ENCODE measurements at regions of chr3 and their contacts with region 1.

Region 1: GRCh38 chr3:72821161-72821781 is 27.0 kb downstream of the SHQ1 start:
- DNase-seq: peak in 1 of 2 donors; percentile 9
- H3K4me3 ChIP-seq: no peak overlapping the region
- H3K27ac ChIP-seq: no peak overlapping the region
- H3K4me1 ChIP-seq: peaks cover 3 to 9% of the 10 kb centered on the region in 2 donors
- H3K27me3 ChIP-seq: no peaks in the 10 kb centered on the region
- CTCF ChIP-seq: no peak
- POLR2A ChIP-seq: no peak

Region 2: DNA sequence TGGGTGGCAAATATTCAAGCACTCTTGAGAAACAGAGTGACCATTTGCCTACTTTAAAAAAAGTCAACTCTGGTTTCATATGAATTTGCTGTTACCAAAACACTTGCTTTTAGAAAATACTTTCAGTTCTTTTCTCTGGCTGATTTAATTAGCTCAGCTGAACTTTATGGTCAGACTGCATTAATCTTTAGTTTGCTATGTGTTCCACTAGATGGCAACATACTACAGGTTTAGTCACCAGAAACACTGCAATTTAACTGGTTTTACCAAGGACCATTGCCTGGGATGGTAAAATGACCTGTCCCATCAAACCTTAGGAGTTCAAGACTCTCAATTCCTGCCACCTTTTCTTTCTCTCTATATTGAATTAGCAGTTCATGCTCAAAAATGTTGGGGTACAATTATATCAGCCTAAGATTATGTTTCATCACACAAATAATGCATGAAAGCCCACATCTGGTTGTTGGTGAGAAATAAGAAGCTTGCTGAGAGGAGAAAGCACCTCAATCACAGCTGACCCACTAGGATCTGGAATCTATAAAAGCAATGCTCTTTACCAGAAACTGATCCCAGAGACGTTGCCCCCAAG is 1110.3 kb before region 1 on chr3:
- intact Hi-C with region 1: loop called (anchors 10 kb)
- DNase-seq: no peak
- H3K4me3 ChIP-seq: no peak overlapping the region
- H3K27ac ChIP-seq: peak overlapping the region; percentile 28 to 60 (median 46)
- H3K4me1 ChIP-seq: peaks cover 14 to 30% of the 10 kb centered on the region in 2 donors
- H3K27me3 ChIP-seq: no peaks in the 10 kb centered on the region
- CTCF ChIP-seq: peak in 5 of 6 experiments; percentile 43 to 86 (median 66)
- POLR2A ChIP-seq: no peak

Region 3: DNA sequence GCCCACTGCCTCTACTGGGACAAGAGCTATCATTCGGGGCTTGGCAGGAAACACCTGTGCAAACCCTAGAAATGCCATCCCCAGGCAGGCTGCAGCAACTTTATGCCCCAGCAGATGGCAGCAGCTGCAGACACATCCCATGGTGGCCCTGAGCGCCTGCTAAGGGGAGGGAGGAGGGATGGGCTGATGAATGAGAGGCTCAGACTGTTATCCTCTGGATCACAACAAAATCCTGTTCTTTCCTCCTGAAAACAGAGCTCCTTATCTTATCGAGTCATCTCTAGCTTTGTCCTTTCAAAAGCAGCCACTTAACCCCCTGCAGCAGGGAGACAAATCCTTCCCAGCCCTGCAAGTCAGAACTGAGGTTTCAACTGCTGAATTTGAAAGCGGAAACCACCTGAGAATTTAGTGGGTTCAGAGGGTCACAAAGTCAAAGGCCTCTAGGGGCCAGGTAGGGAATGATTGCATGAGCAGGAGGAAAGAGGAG is 945.8 kb before region 1 on chr3:
- intact Hi-C with region 1: loop called (anchors 10 kb)
- DNase-seq: peak; percentile 79 to 80
- H3K4me3 ChIP-seq: no peak overlapping the region
- H3K27ac ChIP-seq: no peak overlapping the region
- H3K4me1 ChIP-seq: peaks cover 0 to 7% of the 10 kb centered on the region in 2 donors
- H3K27me3 ChIP-seq: no peaks in the 10 kb centered on the region
- CTCF ChIP-seq: peak; percentile 60 to 92 (median 75)
- POLR2A ChIP-seq: no peak

Region 4: DNA sequence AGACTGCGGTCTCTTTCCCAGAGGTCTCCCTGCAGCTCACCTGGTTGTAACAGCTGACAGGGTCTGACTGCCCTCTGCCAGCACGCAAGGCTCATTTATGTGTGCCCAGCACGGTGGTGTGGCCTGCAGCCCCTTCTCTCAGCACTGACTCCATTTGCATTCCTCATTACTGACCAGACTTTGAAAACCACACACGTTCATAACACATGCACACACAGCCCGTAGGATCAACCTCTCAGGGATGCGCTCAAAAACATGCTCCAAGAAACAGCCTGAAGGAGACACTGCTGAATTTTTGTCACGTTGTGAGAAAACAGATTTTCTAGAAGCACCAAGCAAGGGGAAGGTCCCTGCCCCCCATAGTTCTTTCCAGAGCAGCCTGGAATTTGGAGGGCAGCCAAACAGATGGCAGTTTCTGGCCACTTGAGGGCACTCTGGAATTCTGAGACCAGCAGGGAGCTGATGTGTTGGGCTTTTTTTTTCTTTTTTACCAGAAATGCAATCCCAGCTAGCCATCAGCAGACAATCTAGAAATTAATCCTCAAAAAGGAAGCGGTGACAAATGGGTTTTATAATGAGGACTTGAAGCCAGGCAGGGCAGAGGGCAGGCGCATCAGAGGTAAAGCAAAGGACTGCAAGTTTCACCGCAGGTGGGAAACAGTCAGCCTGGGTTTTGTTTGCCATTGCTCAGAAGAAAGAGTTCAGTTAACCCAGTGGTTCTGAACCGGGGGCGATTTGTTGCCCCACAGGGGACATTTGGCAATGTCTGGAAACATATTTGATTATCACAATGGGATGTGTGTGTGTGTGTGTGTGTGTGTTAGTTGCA is 865.8 kb before region 1 on chr3:
- intact Hi-C with region 1: loop called (anchors 10 kb)
- DNase-seq: peak; percentile 81 to 84
- H3K4me3 ChIP-seq: no peak overlapping the region
- H3K27ac ChIP-seq: no peak overlapping the region
- H3K4me1 ChIP-seq: no peaks in the 10 kb centered on the region
- H3K27me3 ChIP-seq: no peaks in the 10 kb centered on the region
- CTCF ChIP-seq: peak in 4 of 6 experiments; percentile 31 to 70 (median 58)
- POLR2A ChIP-seq: no peak

Region 5: DNA sequence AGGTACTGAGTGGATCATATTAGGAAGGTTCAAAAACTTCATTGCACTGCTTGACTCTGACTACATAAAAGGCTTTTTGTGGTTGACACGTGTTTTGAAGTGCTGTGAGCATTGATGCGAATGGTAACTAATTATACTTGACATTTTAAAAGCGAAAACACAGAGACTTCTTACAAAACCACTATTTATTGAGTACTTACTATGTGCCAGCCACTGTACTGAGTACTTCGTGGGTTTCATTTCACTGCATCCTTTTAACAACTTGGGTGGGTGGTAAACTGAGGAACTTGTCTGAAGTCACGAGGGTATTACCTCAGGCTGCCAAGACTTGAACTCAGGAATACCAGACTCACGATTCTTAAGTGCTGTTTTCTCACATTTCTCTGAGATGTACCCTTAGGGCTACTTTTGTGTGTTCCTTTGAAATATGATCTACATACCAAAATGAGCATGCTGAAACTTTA is 130.0 kb after region 1 on chr3:
- intact Hi-C with region 1: no loop called
- DNase-seq: no peak
- H3K4me3 ChIP-seq: no peak overlapping the region
- H3K27ac ChIP-seq: peak overlapping the region in 1 of 3 donors; percentile 60
- H3K4me1 ChIP-seq: peaks cover 0 to 10% of the 10 kb centered on the region in 2 donors
- H3K27me3 ChIP-seq: no peaks in the 10 kb centered on the region
- CTCF ChIP-seq: no peak
- POLR2A ChIP-seq: no peak

Region 6: DNA sequence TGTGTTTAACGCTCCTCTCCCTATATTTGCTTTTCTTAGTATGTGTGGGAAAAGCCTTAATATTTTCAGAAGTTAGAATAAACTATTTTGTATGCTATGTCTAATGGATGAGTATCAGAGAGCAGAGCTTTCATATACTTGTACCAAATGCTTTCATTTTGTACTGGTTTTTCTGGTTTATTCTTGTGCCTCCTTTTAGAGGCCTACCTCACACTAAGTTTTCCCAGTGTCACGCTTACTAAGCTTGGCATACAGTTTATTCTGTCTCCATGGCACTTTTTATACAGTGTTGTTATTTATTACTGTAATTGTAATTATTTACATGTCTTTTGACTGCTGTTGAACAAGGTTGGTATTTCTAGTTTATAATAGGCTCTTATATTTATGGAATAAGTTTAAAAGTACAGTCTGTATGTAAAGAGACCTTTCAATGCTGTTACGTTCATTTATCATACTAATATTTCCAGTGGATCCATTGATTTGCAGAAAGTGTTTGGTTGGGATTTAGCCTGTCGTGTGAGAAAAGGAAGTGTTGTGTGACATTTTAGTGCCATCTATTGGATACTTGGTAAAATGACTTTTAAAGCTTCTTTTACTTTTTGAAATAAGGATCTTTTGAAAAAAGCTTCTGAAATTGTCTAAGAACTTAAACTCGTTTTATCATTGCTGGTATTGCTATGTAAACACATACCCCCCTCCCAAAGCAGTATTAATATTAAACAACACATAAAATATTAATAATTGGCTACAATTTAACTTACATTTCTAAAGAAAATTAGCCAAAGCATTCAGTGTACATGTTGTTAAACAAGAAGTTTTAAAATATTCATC is 235.0 kb after region 1 on chr3:
- intact Hi-C with region 1: no loop called
- DNase-seq: no peak
- H3K4me3 ChIP-seq: no peak overlapping the region
- H3K27ac ChIP-seq: no peak overlapping the region
- H3K4me1 ChIP-seq: peaks cover 0 to 13% of the 10 kb centered on the region in 2 donors
- H3K27me3 ChIP-seq: no peaks in the 10 kb centered on the region
- CTCF ChIP-seq: peak in 5 of 6 experiments; percentile 36 to 75 (median 60)
- POLR2A ChIP-seq: no peak

Measured in thyroid gland (tissue), 4 donors.